H1 (cell line): ENCODE measurements at regions of chr15 and their contacts with region 1.

Region 1: GRCh38 chr15:65970937-65971740 is 101.8 kb downstream of the RAB11A start:
- DNase-seq: no peak
- H3K4me3 ChIP-seq: no peak overlapping the region
- H3K27ac ChIP-seq: no peak overlapping the region
- H3K4me1 ChIP-seq: peaks cover 0 to 4% (median 0%) of the 10 kb centered on the region in 4 experiments; a peak in 2 of 7 replicates
- H3K27me3 ChIP-seq: no peaks in the 10 kb centered on the region
- CTCF ChIP-seq: no peak
- EP300 ChIP-seq: no peak
- POLR2A ChIP-seq: no peak
- RAD21 ChIP-seq: no peak

Region 2: DNA sequence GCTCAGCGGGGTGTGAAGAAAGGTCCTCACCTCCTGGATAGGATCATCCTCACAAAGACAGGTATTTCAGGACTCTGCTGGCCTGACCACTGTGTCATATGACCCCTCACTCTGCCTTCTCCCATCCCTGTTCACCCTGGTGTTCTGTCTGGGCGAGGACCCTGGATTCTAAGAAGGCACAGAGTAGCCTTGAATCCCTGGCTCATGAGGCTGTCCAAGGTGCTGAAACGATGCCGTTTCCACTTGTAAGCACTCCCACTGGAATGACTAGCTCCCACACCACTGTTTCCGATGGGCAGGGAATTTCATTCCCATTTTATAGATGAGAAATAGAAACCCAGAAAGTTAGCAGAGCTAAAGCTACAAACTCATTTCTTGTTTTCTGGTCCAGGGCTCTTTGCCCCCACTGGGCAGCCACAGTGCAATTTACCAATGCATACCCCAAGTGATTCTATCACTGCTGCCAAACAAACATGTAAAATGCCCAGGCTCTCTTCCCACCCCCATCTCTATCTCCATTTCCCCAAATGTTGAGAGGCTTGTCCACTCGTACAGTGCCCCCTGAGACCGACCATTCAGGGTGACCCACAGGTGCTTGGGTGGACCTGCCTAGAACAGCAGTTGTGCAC is 18.6 kb before region 1 on chr15:
- CTCF ChIA-PET with region 1: interaction called, 3 read pairs
- POLR2A ChIA-PET with region 1: interaction called, 10 read pairs
- DNase-seq: peak in 1 of 2 experiments; percentile 74
- H3K4me3 ChIP-seq: no peak overlapping the region
- H3K27ac ChIP-seq: no peak overlapping the region
- H3K4me1 ChIP-seq: peaks cover 4 to 14% (median 10%) of the 10 kb centered on the region in 4 experiments; a peak in 6 of 7 replicates
- H3K27me3 ChIP-seq: no peaks in the 10 kb centered on the region
- CTCF ChIP-seq: no peak
- EP300 ChIP-seq: no peak
- POLR2A ChIP-seq: no peak
- RAD21 ChIP-seq: no peak